Mammary epithelial cell (primary cell): ENCODE measurements at regions of chrX and their contacts with region 1.

Region 1: DNA sequence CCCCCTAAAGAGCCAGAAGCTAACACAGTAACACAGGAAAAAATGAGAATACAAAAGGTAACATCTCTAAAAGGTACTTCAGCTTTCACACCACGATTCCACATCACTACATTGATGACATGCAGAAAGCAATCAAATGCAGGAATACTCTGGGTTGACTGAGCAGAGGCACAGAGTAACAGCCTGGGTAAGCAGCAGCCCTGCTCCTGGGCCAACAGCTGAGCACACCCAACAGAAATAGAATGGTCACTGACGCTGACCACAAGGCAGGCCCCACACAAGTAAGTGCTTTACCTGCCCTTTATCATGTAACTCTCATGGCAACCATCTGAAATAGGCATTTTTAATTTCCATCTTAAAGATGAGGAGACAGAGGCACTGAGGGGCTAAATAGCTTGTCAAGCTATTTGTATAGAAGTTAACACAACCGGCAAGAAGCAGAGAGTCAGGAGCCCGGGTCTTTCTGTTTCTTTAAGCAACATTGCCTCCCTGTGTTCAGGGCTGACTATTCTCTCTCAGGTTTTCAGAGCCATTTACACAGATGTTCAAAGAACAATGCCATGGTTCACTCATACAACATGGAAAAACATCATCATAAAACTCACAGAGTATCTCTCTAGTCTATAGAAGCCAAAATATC is 168.9 kb downstream of the ZNF674 start:
- DNase-seq: peak; percentile 61
- H3K4me3 ChIP-seq: no peak overlapping the region
- H3K27ac ChIP-seq: peak overlapping the region; percentile 7
- H3K4me1 ChIP-seq: peaks cover 20% of the 10 kb centered on the region
- H3K27me3 ChIP-seq: no peaks in the 10 kb centered on the region
- CTCF ChIP-seq: peak; percentile 50 to 61

Region 2: DNA sequence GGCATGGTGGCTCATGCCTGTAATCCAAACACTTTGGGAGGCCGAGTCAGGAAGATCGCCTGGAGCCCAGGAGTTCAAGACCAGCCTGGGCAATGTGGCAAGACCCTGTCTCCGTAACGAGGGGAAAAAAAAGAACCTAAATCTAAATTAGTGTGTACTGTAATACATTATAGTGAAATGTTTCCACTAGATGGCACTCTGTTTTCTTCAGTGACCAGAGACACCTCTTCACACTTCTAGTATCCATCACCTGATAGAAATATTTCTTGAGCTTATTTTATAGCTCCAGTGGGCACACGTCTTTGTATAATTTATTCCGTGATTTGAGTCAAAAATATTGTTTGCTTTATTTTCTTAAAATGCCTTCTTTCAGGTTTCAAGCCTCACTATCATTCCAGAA is 574.8 kb before region 1 on chrX:
- CTCF ChIA-PET with region 1: no interaction called
- dilution Hi-C with region 1: no loop called
- in situ Hi-C with region 1: no loop called
- intact Hi-C with region 1: loop called (anchors 1 kb)
- DNase-seq: peak; percentile 50
- H3K4me3 ChIP-seq: peak overlapping the region in 1 of 3 experiments; percentile 40
- H3K27ac ChIP-seq: peak overlapping the region; percentile 91
- H3K4me1 ChIP-seq: peaks cover 48% of the 10 kb centered on the region
- H3K27me3 ChIP-seq: no peaks in the 10 kb centered on the region
- CTCF ChIP-seq: peak; percentile 39 to 52

Region 3: GRCh38 chrX:46184749-46185148 is 191.6 kb before region 1 on chrX:
- CTCF ChIA-PET with region 1: no interaction called
- dilution Hi-C with region 1: no loop called
- in situ Hi-C with region 1: no loop called
- intact Hi-C with region 1: loop called (anchors 5 kb)
- DNase-seq: peak; percentile 87
- H3K4me3 ChIP-seq: no peak overlapping the region
- H3K27ac ChIP-seq: peak overlapping the region; percentile 75
- H3K4me1 ChIP-seq: peaks cover 48% of the 10 kb centered on the region
- H3K27me3 ChIP-seq: no peaks in the 10 kb centered on the region
- CTCF ChIP-seq: no peak

Region 4: GRCh38 chrX:46251755-46252154 is 124.6 kb before region 1 on chrX:
- CTCF ChIA-PET with region 1: no interaction called
- dilution Hi-C with region 1: no loop called
- in situ Hi-C with region 1: no loop called
- intact Hi-C with region 1: loop called (anchors 1 kb)
- DNase-seq: peak; percentile 66
- H3K4me3 ChIP-seq: no peak overlapping the region
- H3K27ac ChIP-seq: no peak overlapping the region
- H3K4me1 ChIP-seq: peaks cover 32% of the 10 kb centered on the region
- H3K27me3 ChIP-seq: no peaks in the 10 kb centered on the region
- CTCF ChIP-seq: no peak

Region 5: DNA sequence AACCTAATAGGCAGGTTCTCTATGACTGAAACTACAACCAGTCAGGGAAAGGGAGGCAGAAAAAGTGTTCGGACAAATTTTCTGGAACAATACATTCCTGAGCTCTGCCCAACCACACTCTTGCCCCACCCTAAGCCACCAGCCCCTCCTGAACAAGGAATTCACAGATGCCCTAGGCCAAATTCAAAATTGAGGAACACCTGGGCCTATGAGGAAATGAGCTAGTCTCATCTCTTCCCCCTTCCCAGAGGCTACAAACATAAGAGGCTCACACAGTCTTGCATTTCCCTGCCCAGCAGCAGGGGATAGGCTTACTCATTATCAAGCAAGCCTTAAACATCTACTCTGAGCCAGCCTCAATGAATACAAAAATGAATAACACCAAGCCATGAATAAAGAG is 115.9 kb before region 1 on chrX:
- CTCF ChIA-PET with region 1: interaction called, 3 read pairs
- dilution Hi-C with region 1: no loop called
- in situ Hi-C with region 1: no loop called
- intact Hi-C with region 1: loop called (anchors 1 kb)
- DNase-seq: peak; percentile 97
- H3K4me3 ChIP-seq: no peak overlapping the region
- H3K27ac ChIP-seq: peak overlapping the region; percentile 98
- H3K4me1 ChIP-seq: peaks cover 60% of the 10 kb centered on the region
- H3K27me3 ChIP-seq: no peaks in the 10 kb centered on the region
- CTCF ChIP-seq: peak in 1 of 2 donors; percentile 12

Region 6: DNA sequence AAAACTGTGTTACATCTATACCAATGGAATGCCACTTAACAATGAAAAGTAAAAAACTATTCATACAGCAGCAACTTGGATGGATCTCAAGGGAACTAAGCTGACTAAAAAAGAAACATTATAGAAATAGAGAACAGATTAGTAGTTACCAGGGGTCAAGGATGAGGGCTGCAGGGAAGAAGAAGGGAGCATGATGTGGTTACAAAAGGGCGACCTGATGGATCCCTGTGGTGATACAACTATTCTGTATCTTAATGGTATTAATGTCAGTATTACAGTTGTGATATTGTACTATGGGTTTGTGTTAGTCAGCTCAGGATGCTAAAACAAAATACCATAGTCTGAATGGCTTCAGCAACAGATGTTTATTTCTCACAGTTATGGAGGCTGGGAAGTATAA is 21.9 kb before region 1 on chrX:
- CTCF ChIA-PET with region 1: no interaction called
- dilution Hi-C with region 1: no loop called
- in situ Hi-C with region 1: no loop called
- intact Hi-C with region 1: no loop called
- DNase-seq: no peak
- H3K4me3 ChIP-seq: no peak overlapping the region
- H3K27ac ChIP-seq: no peak overlapping the region
- H3K4me1 ChIP-seq: no peaks in the 10 kb centered on the region
- H3K27me3 ChIP-seq: no peaks in the 10 kb centered on the region
- CTCF ChIP-seq: no peak